CD14-positive monocyte (primary cell): ENCODE measurements at regions of chr3 and their contacts with region 1.

Region 1: DNA sequence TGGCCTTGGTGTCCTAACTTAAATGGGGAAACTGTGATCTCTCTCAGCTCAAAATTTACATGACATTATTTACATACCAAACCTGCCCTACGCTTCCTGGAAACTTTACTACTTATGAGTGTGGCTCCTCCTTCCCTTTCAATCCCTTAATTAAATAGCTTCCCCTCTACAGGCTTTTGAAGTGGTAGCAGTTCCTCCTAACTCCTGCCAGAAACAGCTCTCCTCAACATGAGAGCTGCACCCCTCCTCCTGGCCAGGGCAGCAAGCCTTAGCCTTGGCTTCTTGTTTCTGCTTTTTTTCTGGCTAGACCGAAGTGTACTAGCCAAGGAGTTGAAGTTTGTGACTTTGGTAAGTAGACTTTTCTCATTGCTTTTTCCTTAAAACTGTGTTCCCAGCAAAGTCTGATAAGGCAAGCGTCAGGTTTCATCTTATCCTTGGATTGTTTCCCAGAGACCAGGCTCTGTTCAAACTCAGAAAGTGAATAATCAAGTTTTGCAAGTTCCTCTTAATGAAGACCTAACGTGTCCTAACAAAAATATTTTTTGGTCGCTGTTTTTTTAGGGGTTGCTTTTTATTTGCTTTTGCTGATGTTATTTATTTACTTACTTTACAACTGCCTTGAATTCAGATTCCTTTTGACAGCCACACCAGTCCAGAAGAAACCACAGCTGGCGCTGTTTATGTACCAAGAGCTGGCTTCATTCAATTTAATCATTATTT is at the start of gene ACP3:
- DNase-seq: peak; percentile 81 to 87 (median 81)
- H3K4me3 ChIP-seq: peak within 1 kb of the TSS; percentile 54 to 99 (median 95)
- H3K4me3 Mint-ChIP-seq: peak within 1 kb of the TSS; percentile 84 to 94
- H3K27ac ChIP-seq: peak within 1 kb of the TSS; percentile 70 to 88
- H3K27ac Mint-ChIP-seq: peak within 1 kb of the TSS; percentile 93 to 95 (median 93)
- H3K4me1 ChIP-seq: peaks cover 35 to 56% of the 10 kb centered on the region in 2 donors
- H3K4me1 Mint-ChIP-seq: peaks cover 64% of the 10 kb centered on the region
- H3K27me3 ChIP-seq: no peaks in the 10 kb centered on the region
- H3K27me3 Mint-ChIP-seq: no peaks in the 10 kb centered on the region
- CTCF ChIP-seq: no peak
- polyA plus RNA-seq, gene ACP3: 33.9 to 55.6 (median 44.0) TPM

Region 2: GRCh38 chr3:132231633-132232032 is 85.8 kb before region 1 on chr3:
- intact Hi-C with region 1: no loop called
- DNase-seq: no peak
- H3K4me3 ChIP-seq: no peak overlapping the region
- H3K4me3 Mint-ChIP-seq: no peak overlapping the region
- H3K27ac ChIP-seq: no peak overlapping the region
- H3K27ac Mint-ChIP-seq: peak overlapping the region in 2 of 7 donors; percentile 14 to 32
- H3K4me1 ChIP-seq: peaks cover 7 to 17% of the 10 kb centered on the region in 2 donors
- H3K4me1 Mint-ChIP-seq: peaks cover 28% of the 10 kb centered on the region
- H3K27me3 ChIP-seq: no peaks in the 10 kb centered on the region
- H3K27me3 Mint-ChIP-seq: peaks cover 0 to 2% (median 2%) of the 10 kb centered on the region in 3 donors
- CTCF ChIP-seq: no peak

Region 3: DNA sequence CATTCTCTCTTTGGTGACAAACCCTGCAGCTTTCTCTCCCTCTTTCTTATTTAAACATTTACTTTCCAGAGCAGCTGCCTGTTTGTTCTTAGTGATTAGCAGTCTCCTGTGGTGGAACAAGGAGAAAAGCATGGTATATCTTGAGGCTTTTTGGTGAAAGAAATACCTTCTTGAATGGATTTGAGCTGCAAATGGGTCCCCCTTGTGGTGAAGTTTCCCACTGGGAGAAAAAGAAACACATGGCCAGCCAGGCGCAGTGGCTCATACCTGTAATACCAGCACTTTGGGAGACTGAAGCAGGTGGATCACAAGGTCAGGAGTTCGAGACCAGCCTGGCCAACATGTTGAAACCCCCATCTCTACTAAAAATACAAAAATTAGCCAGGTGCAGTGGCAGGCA is 48.4 kb before region 1 on chr3:
- intact Hi-C with region 1: loop called in 1 of 2 experiments (anchors 10 kb)
- DNase-seq: peak in 2 of 3 donors; percentile 16 to 18
- H3K4me3 ChIP-seq: no peak overlapping the region
- H3K4me3 Mint-ChIP-seq: no peak overlapping the region
- H3K27ac ChIP-seq: no peak overlapping the region
- H3K27ac Mint-ChIP-seq: peak overlapping the region in 1 of 7 donors; percentile 43
- H3K4me1 ChIP-seq: no peaks in the 10 kb centered on the region
- H3K4me1 Mint-ChIP-seq: peaks cover 2% of the 10 kb centered on the region
- H3K27me3 ChIP-seq: no peaks in the 10 kb centered on the region
- H3K27me3 Mint-ChIP-seq: peaks cover 0 to 2% (median 2%) of the 10 kb centered on the region in 3 donors
- CTCF ChIP-seq: peak; percentile 58

Region 4: DNA sequence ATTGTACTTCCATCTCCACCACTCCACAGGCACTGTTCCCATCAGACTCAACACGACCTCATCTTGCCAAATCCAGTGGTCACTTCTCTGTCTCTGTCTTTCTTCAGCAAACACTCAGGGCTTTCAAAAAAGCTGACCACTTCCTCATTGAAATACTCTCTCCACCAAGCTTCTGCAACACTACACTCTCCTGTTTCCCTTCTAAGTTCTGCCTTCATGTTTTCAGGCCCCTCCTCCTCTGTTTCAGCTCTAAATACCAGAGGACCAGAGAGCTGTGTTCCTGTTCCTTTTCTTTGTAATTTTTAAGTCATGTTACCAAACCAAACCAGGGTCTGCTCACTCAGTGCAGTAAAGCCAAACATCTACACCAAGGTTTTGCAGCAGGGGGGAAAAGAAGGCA is 33.9 kb before region 1 on chr3:
- intact Hi-C with region 1: loop called in 1 of 2 experiments (anchors 5 kb)
- DNase-seq: peak; percentile 84 to 90 (median 86)
- H3K4me3 ChIP-seq: peak overlapping the region in 1 of 3 experiments; percentile 48
- H3K4me3 Mint-ChIP-seq: peak overlapping the region in 1 of 2 donors; percentile 80
- H3K27ac ChIP-seq: peak overlapping the region; percentile 78
- H3K27ac Mint-ChIP-seq: peak overlapping the region; percentile 79 to 94 (median 93)
- H3K4me1 ChIP-seq: peaks cover 44 to 45% of the 10 kb centered on the region in 2 donors
- H3K4me1 Mint-ChIP-seq: peaks cover 49% of the 10 kb centered on the region
- H3K27me3 ChIP-seq: no peaks in the 10 kb centered on the region
- H3K27me3 Mint-ChIP-seq: no peaks in the 10 kb centered on the region
- CTCF ChIP-seq: no peak

Region 5: GRCh38 chr3:132432639-132433038 is 115.2 kb after region 1 on chr3:
- intact Hi-C with region 1: no loop called
- DNase-seq: peak; percentile 27 to 72 (median 58)
- H3K4me3 ChIP-seq: no peak overlapping the region
- H3K4me3 Mint-ChIP-seq: no peak overlapping the region
- H3K27ac ChIP-seq: peak overlapping the region in 1 of 2 donors; percentile 69
- H3K27ac Mint-ChIP-seq: peak overlapping the region in 4 of 7 donors; percentile 33 to 86 (median 64)
- H3K4me1 ChIP-seq: peaks cover 20 to 52% of the 10 kb centered on the region in 2 donors
- H3K4me1 Mint-ChIP-seq: peaks cover 56% of the 10 kb centered on the region
- H3K27me3 ChIP-seq: no peaks in the 10 kb centered on the region
- H3K27me3 Mint-ChIP-seq: no peaks in the 10 kb centered on the region
- CTCF ChIP-seq: no peak

Region 6: GRCh38 chr3:132469326-132469725 is 151.9 kb after region 1 on chr3:
- intact Hi-C with region 1: no loop called
- DNase-seq: no peak
- H3K4me3 ChIP-seq: no peak overlapping the region
- H3K4me3 Mint-ChIP-seq: no peak overlapping the region
- H3K27ac ChIP-seq: no peak overlapping the region
- H3K27ac Mint-ChIP-seq: no peak overlapping the region
- H3K4me1 ChIP-seq: no peaks in the 10 kb centered on the region
- H3K4me1 Mint-ChIP-seq: no peaks in the 10 kb centered on the region
- H3K27me3 ChIP-seq: no peaks in the 10 kb centered on the region
- H3K27me3 Mint-ChIP-seq: no peaks in the 10 kb centered on the region
- CTCF ChIP-seq: no peak

Region 7: DNA sequence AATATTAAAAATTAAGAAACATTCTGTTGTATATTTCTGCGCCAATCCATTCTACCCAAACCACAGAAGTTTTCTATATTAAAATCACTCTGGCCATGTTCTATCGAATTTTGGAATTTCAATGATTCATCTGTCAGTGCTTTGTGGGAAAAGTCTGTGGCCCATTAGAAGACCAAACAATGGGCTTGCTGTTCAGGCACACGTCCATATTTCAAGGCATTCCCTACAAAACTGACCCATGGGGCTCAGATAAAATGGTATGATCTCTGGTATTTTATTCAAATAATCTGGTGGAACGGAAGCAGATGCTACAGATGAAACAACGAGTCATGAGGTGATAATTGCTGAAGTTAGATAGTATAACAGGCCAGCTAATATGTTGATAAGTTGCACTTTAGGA is 392.4 kb after region 1 on chr3:
- intact Hi-C with region 1: no loop called
- DNase-seq: no peak
- H3K4me3 ChIP-seq: no peak overlapping the region
- H3K4me3 Mint-ChIP-seq: no peak overlapping the region
- H3K27ac ChIP-seq: no peak overlapping the region
- H3K27ac Mint-ChIP-seq: no peak overlapping the region
- H3K4me1 ChIP-seq: no peaks in the 10 kb centered on the region
- H3K4me1 Mint-ChIP-seq: no peaks in the 10 kb centered on the region
- H3K27me3 ChIP-seq: no peaks in the 10 kb centered on the region
- H3K27me3 Mint-ChIP-seq: no peaks in the 10 kb centered on the region
- CTCF ChIP-seq: no peak